Mammary epithelial cell (primary cell): ENCODE measurements at regions of chr9 and their contacts with region 1.

Region 1: GRCh38 chr9:34907044-34907443 is 51.0 kb upstream of the PHF24 start:
- DNase-seq: no peak
- H3K4me3 ChIP-seq: no peak overlapping the region
- H3K27ac ChIP-seq: no peak overlapping the region
- H3K4me1 ChIP-seq: no peaks in the 10 kb centered on the region
- H3K27me3 ChIP-seq: peaks cover 2% of the 10 kb centered on the region
- CTCF ChIP-seq: no peak

Region 2: GRCh38 chr9:34446468-34446891 is 460.6 kb before region 1 on chr9:
- CTCF ChIA-PET with region 1: no interaction called
- dilution Hi-C with region 1: no loop called
- in situ Hi-C with region 1: no loop called
- intact Hi-C with region 1: no loop called
- DNase-seq: no peak
- H3K4me3 ChIP-seq: no peak overlapping the region
- H3K27ac ChIP-seq: no peak overlapping the region
- H3K4me1 ChIP-seq: peaks cover 2% of the 10 kb centered on the region
- H3K27me3 ChIP-seq: no peaks in the 10 kb centered on the region
- CTCF ChIP-seq: no peak

Region 3: GRCh38 chr9:35001803-35002502 is 94.9 kb after region 1 on chr9:
- CTCF ChIA-PET with region 1: no interaction called
- dilution Hi-C with region 1: loop called (anchors 5 kb)
- in situ Hi-C with region 1: no loop called
- intact Hi-C with region 1: no loop called
- DNase-seq: peak; percentile 91
- H3K4me3 ChIP-seq: no peak overlapping the region
- H3K27ac ChIP-seq: peak overlapping the region; percentile 61
- H3K4me1 ChIP-seq: peaks cover 21% of the 10 kb centered on the region
- H3K27me3 ChIP-seq: no peaks in the 10 kb centered on the region
- CTCF ChIP-seq: no peak